ENCODE measurements at regions of chr1 and their contacts with region 1.

Region 1: DNA sequence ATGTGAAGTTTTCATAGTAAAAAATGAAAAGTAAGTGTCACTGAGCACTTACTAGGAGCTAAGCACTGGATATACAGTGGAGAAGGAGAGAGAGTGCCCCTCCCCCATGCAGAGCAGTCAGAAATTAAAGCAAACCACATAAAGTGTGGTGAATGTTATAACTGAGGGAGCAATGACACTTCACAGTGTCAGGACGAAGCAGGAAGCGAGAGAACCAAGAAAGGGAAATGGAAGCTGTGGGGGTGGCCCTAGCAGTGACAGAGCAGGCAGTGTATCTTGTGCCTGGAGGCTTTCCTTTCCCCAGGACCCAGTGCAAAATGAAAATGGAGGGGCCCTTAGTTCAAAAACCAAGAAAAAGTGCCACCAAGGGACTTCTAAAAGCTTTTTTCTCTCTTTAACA is 21.5 kb upstream of the RCAN3 start:
- DNase-seq: peak in 2 of 4 experiments; percentile 36 to 48
- ATAC-seq: peak; percentile 79
- H3K4me3 ChIP-seq: no peak overlapping the region
- H3K27ac ChIP-seq: peak overlapping the region; percentile 51; the same call in 2 of the 3 replicates
- H3K4me1 ChIP-seq: peaks cover 0 to 12% of the 10 kb centered on the region in 2 experiments; a peak in 3 of 5 replicates
- H3K27me3 ChIP-seq: no peaks in the 10 kb centered on the region
- CTCF ChIP-seq: no peak
- EP300 ChIP-seq: no peak
- POLR2A ChIP-seq: no peak
- RAD21 ChIP-seq: no peak

Region 2: DNA sequence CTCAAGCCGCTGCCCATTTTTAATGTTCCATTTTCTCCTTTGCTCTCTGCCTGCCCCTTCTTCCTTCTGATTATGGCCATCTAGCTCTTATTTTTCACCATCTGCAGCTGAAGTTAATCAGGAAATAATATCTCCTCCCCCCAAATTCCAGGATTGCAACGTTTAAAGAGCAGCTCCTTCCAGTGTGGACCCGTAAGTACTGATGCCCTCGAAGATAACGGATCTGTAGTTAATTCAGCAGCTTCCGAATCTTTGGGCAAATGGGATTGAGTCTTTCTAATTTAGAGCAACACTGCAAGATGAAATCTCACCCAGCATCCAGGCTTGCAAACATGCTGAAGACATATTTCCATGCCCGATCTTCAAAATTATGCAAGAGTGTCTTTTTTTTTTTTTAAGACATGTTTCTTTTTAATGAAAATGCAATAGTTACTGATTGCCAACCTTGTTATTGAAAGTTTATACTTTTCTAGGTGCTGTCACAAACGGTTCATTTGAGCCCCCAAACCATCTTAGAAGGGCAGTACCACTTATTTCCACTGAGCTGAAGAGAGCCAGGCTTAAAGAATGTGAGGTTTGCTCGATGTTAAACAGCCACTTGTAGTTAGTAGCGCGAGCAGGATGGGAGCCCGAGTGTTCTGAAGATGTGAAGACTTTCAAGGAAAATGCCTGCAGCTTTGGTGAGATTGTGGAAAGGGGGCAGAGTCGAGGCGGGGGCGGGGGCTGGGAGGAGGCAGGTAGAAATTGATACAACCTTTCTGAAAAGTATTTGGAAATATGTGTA is 10.7 kb after region 1 on chr1:
- CTCF ChIA-PET with region 1: no interaction called
- POLR2A ChIA-PET with region 1: interaction called, 11 read pairs
- in situ Hi-C with region 1: no loop called
- intact Hi-C with region 1: no loop called
- DNase-seq: no peak
- ATAC-seq: peak; percentile 52; the same call in 1 of the 3 replicates
- H3K4me3 ChIP-seq: no peak overlapping the region
- H3K27ac ChIP-seq: no peak overlapping the region
- H3K4me1 ChIP-seq: no peaks in the 10 kb centered on the region; a peak in 2 of 5 replicates
- H3K27me3 ChIP-seq: peaks cover 8 to 30% of the 10 kb centered on the region in 2 experiments; a peak in 4 of 5 replicates
- CTCF ChIP-seq: no peak
- EP300 ChIP-seq: no peak
- POLR2A ChIP-seq: no peak
- RAD21 ChIP-seq: no peak

Measured in K562 (cell line).